ENCODE measurements at regions of chr7 and their contacts with region 1.

Region 1: GRCh38 chr7:127534636-127535035 is 50.8 kb downstream of the GCC1 start:
- DNase-seq: no peak
- ATAC-seq: no peak

Region 2: GRCh38 chr7:126378642-126379041 is 1156.0 kb before region 1 on chr7:
- intact Hi-C with region 1: no loop called
- DNase-seq: no peak
- ATAC-seq: no peak

Region 3: DNA sequence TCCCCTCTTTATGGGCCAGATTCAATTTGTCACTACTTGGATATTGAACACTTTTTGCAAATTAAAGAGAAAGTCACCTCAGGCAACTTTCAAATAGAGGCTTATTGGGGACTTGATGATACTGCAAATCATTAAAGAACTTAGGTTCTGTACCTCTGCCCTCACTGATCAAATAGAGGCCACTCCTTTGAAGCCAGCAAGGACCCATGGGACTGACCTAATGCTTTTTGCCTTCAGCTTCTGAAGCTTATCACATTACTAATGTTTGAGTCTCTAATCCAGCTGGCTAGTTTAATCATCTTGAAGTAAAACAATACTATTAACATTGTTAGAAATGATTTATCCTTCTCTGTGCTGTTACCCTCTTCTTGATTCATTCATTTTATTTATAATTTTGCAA is 49.2 kb before region 1 on chr7:
- intact Hi-C with region 1: loop called (anchors 2 kb)
- DNase-seq: no peak
- ATAC-seq: no peak